ENCODE measurements at regions of chr13 and their contacts with region 1.

Region 1: GRCh38 chr13:113393563-113394338 is 29.8 kb upstream of the GRTP1 start:
- DNase-seq: peak; percentile 94
- ATAC-seq: peak; percentile 88

Region 2: GRCh38 chr13:112942689-112943308 is 451.0 kb before region 1 on chr13:
- intact Hi-C with region 1: loop called (anchors 10 kb)
- DNase-seq: peak; percentile 96
- ATAC-seq: peak; percentile 96

Region 3: DNA sequence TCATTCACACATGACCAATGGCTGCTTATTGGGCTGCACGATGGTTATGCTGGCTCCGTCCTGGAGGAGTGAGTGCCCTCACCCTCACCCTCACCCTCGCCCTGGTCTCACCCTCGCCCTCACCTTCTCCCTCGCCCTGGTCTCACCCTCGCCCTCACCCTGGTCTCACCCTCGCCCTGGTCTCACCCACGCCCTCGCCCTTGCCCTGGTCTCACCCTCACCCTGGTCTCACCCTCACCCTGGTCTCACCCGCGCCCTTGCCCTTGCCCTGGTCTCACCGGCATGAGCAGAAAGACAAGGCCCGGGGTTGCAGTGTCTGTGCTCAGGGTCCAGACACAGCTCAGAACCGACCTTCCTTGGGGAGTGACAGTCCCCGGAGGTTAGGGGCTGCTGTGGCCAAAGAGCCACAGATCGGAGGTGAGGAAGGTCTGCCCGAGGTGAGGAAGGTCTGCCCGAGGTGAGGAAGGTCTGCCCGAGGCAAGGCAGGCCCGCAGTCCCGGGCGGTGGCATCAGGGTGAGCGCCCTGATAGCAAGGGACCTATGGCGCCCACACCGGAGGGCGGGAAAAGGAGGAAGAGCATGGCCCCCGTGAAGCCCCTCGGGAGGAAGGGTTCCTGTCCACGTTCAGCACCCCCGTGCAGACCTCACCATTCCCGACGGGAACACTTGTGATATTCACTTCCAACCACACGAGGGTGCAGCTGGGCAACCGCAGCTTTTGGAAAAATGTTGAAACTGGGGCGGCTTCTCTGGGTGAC is 359.1 kb before region 1 on chr13:
- intact Hi-C with region 1: loop called (anchors 5 kb)
- DNase-seq: no peak
- ATAC-seq: peak; percentile 78

Region 4: GRCh38 chr13:113153810-113154748 is 239.7 kb before region 1 on chr13:
- intact Hi-C with region 1: loop called (anchors 10 kb)
- DNase-seq: peak; percentile 93
- ATAC-seq: peak; percentile 84

Region 5: GRCh38 chr13:113275387-113275786 is 118.4 kb before region 1 on chr13:
- intact Hi-C with region 1: loop called (anchors 5 kb)
- DNase-seq: no peak
- ATAC-seq: no peak

Region 6: DNA sequence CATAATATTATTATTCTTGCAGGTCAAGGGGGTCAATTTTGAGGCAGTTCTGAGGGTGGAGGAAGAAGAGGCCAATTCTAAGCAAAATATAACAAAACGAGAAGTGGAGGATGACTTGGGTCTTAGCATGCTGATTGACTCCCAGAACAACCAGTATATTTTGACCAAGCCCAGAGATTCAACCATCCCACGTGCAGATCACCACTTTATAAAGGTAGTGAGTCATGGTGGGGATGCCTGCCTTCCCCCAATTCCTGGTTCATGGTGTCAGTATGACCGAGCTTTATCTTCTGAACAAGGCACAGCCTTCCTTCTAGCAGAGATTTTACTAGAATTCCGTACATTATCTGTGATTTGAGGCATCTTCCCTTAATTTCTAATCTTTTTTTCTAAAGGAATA is 106.2 kb after region 1 on chr13:
- intact Hi-C with region 1: no loop called
- DNase-seq: no peak
- ATAC-seq: no peak

Region 7: GRCh38 chr13:113639616-113640262 is 246.0 kb after region 1 on chr13:
- intact Hi-C with region 1: no loop called
- DNase-seq: no peak
- ATAC-seq: peak; percentile 88

Region 8: DNA sequence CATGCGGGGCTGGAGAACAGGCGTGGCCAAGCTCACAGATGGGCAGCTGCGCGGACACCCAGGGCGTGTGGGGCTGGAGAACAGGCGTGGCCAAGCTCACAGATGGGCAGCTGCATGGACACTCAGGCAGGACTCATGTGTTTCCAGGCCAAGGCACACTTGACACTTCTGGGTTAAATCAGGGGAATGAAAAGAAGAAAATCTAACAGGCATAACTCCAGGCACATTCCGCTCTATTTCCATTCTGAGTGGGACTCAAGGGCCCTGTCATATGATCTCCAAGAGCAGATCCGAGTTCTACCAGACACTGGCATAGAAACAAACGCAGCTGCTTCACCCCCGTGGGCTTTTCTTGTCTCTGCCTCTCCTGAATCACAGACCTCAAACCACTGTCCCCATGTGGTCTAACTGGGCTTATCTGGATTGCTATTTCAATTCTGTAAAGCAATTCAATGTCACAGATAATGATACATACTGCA is 597.5 kb after region 1 on chr13:
- intact Hi-C with region 1: no loop called
- DNase-seq: no peak
- ATAC-seq: peak; percentile 73